ENCODE measurements at regions of chr9 and their contacts with region 1.

Region 1: DNA sequence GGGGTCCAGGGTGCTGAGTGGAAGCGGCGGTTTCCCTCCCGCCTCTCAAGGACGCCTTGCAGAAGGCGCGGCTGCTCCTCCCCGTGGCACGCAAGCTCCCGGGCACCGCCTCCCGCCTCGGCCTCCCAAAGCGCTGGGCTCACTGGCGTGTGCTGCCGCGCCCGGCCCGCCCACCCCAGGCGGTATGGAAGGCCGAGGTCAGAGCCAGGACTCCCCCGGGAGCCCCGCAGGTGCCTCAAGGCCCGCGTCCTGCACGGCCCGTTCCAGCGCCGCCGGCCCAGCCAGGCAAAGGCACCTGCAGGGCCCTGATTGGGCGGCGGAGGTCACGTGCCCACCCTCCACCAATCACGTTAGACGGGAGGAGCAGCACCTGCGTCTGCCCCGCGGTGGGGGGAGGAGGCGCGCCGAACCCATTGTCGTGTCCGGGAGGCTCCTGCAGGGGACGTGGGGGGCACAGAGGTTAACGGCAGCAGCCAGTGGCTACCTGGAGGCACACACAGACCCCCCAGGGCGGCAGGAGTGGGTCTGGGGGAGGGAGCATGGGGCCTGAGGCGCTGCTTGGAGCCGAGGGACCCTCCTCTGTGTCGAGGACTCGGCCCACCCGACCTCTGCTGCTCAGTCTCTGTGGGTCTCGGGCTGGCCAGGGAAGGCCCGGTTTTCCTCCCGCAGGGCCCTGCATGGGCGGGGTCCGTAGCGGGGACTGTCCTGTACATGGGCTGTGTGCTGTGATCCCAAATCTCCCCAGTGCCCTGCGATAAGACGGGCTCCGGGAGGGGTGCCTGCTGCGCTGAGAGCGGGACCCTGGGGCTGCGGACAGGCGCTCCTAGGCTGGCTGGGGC is 2.0 kb upstream of the LCN12 start:
- DNase-seq: peak; percentile 96
- ATAC-seq: peak; percentile 84 to 91 (median 89)
- H3K4me3 ChIP-seq: peak overlapping the region; percentile 51 to 91 (median 67)
- H3K27ac ChIP-seq: peak overlapping the region; percentile 85 to 97 (median 94)
- H3K4me1 ChIP-seq: peaks cover 19 to 63% (median 29%) of the 10 kb centered on the region in 9 donors
- H3K27me3 ChIP-seq: no peaks in the 10 kb centered on the region
- CTCF ChIP-seq: peak in 5 of 9 donors; percentile 5 to 28 (median 13)

Region 2: GRCh38 chr9:136978073-136978864 is 28.2 kb after region 1 on chr9:
- intact Hi-C with region 1: loop called in 3 of 10 experiments (anchors 2 to 5 kb)
- DNase-seq: peak; percentile 89
- ATAC-seq: peak; percentile 25 to 50 (median 39)
- H3K4me3 ChIP-seq: peak overlapping the region; percentile 49 to 67 (median 58)
- H3K27ac ChIP-seq: peak overlapping the region; percentile 58 to 93 (median 89)
- H3K4me1 ChIP-seq: peaks cover 16 to 94% (median 62%) of the 10 kb centered on the region in 9 donors
- H3K27me3 ChIP-seq: peaks cover 0 to 24% (median 0%) of the 10 kb centered on the region in 7 donors
- CTCF ChIP-seq: no peak

Region 3: GRCh38 chr9:137029058-137029936 is 79.3 kb after region 1 on chr9:
- intact Hi-C with region 1: loop called in 8 of 10 experiments (anchors 2 to 5 kb)
- DNase-seq: peak; percentile 78 to 88
- ATAC-seq: peak; percentile 59 to 83 (median 70)
- H3K4me3 ChIP-seq: peak overlapping the region in 9 of 10 donors; percentile 1 to 88 (median 68)
- H3K27ac ChIP-seq: peak overlapping the region in 3 of 10 donors; percentile 15 to 83 (median 53)
- H3K4me1 ChIP-seq: peaks cover 12 to 55% (median 30%) of the 10 kb centered on the region in 9 donors
- H3K27me3 ChIP-seq: no peaks in the 10 kb centered on the region
- CTCF ChIP-seq: peak; percentile 82 to 96 (median 89)

Region 4: GRCh38 chr9:137034863-137035761 is 85.1 kb after region 1 on chr9:
- intact Hi-C with region 1: loop called in 9 of 10 experiments (anchors 2 to 5 kb)
- DNase-seq: peak; percentile 76 to 86
- ATAC-seq: peak; percentile 67 to 89 (median 79)
- H3K4me3 ChIP-seq: peak overlapping the region in 1 of 10 donors; percentile 15
- H3K27ac ChIP-seq: peak overlapping the region in 2 of 10 donors; percentile 6 to 83
- H3K4me1 ChIP-seq: peaks cover 6 to 43% (median 11%) of the 10 kb centered on the region in 9 donors
- H3K27me3 ChIP-seq: no peaks in the 10 kb centered on the region
- CTCF ChIP-seq: peak; percentile 88 to 95 (median 93)